ENCODE measurements at regions of chr6 and their contacts with region 1.

Region 1: DNA sequence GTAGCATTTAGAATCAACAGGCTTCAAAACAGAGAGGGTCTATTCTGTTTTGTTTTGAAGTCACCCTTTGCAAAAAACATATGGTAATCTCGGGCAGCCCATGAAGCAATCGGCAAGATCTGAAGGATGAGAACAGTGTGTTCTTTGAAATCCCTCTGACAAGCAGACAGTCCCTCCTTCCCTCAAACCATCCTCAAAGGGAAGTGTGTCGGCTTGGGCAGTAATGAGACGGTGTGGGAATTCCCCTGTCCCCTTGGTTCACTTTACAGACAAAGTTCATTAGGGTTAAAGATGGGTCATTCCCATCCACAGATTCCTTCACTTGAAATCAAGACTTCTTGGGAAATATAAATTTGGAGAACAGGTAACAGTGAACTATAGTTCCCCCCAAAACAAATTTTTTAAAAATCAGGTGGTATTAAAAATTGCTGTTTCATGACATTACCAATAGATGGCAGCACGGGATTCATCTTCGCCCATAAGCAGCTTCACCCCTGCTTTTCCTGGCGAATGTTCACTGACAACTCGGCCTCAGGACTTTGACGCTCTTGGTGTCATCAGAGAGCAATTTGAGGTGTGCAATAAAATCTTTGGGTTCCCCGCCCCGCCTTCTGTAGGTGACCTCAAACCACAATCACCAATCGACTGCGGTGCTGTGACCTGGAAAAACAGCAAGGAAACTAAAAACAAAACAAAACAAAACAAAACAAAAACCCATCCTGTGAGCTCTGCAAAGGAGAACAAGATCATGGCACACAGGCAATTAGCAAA is 159.3 kb upstream of the TNFAIP3 start:
- DNase-seq: peak; percentile 86 to 92 (median 89)
- H3K4me3 ChIP-seq: peak overlapping the region in 1 of 7 experiments; percentile 36
- H3K27ac ChIP-seq: no peak overlapping the region
- H3K4me1 ChIP-seq: peaks cover 0 to 16% (median 8%) of the 10 kb centered on the region in 4 experiments
- H3K27me3 ChIP-seq: no peaks in the 10 kb centered on the region

Region 2: GRCh38 chr6:137799950-137800568 is 92.3 kb after region 1 on chr6:
- CTCF ChIA-PET with region 1: interaction called, 13 read pairs
- POLR2A ChIA-PET with region 1: no interaction called
- DNase-seq: peak; percentile 82 to 90 (median 88)
- H3K4me3 ChIP-seq: no peak overlapping the region
- H3K27ac ChIP-seq: no peak overlapping the region
- H3K4me1 ChIP-seq: peaks cover 0 to 13% (median 7%) of the 10 kb centered on the region in 4 experiments
- H3K27me3 ChIP-seq: no peaks in the 10 kb centered on the region

Region 3: DNA sequence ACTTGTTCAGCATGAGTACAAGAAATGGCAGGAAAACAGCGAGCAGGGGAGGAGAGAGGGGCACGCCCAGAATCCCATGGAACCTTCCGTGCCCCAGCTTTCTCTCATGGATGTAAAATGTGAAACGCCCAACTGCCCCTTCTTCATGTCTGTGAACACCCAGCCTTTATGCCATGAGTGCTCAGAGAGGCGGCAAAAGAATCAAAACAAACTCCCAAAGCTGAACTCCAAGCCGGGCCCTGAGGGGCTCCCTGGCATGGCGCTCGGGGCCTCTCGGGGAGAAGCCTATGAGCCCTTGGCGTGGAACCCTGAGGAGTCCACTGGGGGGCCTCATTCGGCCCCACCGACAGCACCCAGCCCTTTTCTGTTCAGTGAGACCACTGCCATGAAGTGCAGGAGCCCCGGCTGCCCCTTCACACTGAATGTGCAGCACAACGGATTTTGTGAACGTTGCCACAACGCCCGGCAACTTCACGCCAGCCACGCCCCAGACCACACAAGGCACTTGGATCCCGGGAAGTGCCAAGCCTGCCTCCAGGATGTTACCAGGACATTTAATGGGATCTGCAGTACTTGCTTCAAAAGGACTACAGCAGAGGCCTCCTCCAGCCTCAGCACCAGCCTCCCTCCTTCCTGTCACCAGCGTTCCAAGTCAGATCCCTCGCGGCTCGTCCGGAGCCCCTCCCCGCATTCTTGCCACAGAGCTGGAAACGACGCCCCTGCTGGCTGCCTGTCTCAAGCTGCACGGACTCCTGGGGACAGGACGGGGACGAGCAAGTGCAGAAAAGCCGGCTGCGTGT is 170.9 kb after region 1 on chr6:
- CTCF ChIA-PET with region 1: interaction called, 11 read pairs
- POLR2A ChIA-PET with region 1: no interaction called
- DNase-seq: no peak
- H3K4me3 ChIP-seq: no peak overlapping the region
- H3K27ac ChIP-seq: no peak overlapping the region
- H3K4me1 ChIP-seq: peaks cover 2 to 19% (median 15%) of the 10 kb centered on the region in 4 experiments
- H3K27me3 ChIP-seq: no peaks in the 10 kb centered on the region

Region 4: GRCh38 chr6:137933696-137934095 is 225.9 kb after region 1 on chr6:
- CTCF ChIA-PET with region 1: interaction called, 23 read pairs
- POLR2A ChIA-PET with region 1: no interaction called
- DNase-seq: no peak
- H3K4me3 ChIP-seq: no peak overlapping the region
- H3K27ac ChIP-seq: no peak overlapping the region
- H3K4me1 ChIP-seq: peaks cover 0 to 9% (median 6%) of the 10 kb centered on the region in 4 experiments
- H3K27me3 ChIP-seq: no peaks in the 10 kb centered on the region

Region 5: GRCh38 chr6:137938770-137939379 is 231.1 kb after region 1 on chr6:
- CTCF ChIA-PET with region 1: interaction called, 76 read pairs
- POLR2A ChIA-PET with region 1: no interaction called
- DNase-seq: no peak
- H3K4me3 ChIP-seq: no peak overlapping the region
- H3K27ac ChIP-seq: no peak overlapping the region
- H3K4me1 ChIP-seq: peaks cover 0 to 11% (median 4%) of the 10 kb centered on the region in 4 experiments
- H3K27me3 ChIP-seq: no peaks in the 10 kb centered on the region

Region 6: DNA sequence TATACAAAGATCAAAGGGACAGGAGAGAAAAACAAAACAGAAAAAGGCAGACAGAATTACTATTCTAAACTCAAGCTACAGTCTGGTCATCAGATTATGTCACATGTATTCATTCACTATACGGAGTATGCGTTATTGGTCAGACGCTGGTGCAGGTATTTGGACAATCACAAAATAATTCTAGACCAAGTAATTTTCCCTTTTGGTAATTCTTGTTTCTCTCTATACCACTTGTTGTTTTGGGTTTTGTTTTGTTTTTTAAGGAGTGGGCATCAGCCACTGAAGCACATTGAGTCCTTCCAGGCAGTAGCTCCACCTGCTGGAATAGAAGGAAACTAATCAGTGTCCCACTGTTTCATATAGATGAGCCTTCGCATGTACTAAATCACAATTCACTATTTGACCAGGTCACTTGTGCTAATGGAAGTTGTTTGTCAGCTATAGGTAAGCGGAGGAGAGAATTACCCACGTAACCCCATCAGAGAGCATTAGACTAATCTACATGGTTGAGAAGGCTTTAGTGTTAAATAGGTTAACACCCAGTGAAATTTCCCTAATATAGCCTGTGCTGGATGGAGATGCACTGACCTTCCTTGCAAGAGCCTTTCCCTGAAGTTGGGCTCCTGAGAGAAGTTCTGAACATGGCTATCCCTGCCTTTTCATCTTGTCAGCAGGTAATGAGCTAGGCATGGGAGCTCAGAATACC is 237.2 kb after region 1 on chr6:
- CTCF ChIA-PET with region 1: interaction called, 76 read pairs
- POLR2A ChIA-PET with region 1: no interaction called
- DNase-seq: peak; percentile 49 to 73 (median 67)
- H3K4me3 ChIP-seq: no peak overlapping the region
- H3K27ac ChIP-seq: no peak overlapping the region
- H3K4me1 ChIP-seq: peaks cover 0 to 8% (median 3%) of the 10 kb centered on the region in 4 experiments
- H3K27me3 ChIP-seq: peaks cover 0 to 2% (median 0%) of the 10 kb centered on the region in 5 experiments

Region 7: DNA sequence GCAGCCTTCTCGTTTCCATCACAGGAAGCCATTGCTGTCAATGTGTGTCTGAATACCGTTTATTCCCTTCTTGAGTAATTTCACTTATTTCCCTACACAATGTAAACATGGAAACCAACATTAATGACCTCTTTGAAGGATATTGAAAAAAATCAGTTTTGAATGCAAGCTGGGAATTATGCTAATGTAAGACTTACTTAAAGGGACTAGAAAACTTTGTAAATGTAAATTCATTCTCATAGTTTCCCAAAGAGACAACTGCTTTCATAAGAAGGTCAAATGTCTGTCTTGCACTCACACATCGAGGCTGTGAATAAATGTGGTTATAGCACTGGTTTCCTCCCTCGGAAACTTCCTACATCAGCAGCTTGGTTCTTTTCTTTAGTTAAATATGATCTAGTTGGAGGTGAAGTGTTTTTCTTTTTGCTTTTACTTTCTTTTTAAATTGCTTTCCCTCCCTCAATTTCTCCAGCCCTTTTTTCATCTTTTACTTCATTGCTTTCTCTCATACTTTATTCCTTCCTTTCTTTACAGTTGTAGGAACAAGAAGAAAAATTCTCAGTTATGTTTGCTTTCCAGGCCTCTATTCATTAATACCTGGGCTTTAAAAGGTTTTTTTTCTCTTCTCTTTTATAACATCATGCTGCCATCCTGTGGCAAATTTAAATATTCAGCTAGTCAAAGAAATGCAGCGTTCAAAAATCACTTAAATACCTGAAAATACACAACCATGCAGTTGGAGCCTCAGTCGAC is 267.6 kb after region 1 on chr6:
- CTCF ChIA-PET with region 1: interaction called, 16 read pairs
- POLR2A ChIA-PET with region 1: no interaction called
- DNase-seq: peak; percentile 32 to 66 (median 59)
- H3K4me3 ChIP-seq: peak overlapping the region in 2 of 7 experiments; percentile 3 to 58
- H3K27ac ChIP-seq: peak overlapping the region in 1 of 2 experiments; percentile 62
- H3K4me1 ChIP-seq: peaks cover 0 to 21% (median 13%) of the 10 kb centered on the region in 4 experiments
- H3K27me3 ChIP-seq: no peaks in the 10 kb centered on the region